ENCODE measurements at regions of chr20 and their contacts with region 1.

Region 1: DNA sequence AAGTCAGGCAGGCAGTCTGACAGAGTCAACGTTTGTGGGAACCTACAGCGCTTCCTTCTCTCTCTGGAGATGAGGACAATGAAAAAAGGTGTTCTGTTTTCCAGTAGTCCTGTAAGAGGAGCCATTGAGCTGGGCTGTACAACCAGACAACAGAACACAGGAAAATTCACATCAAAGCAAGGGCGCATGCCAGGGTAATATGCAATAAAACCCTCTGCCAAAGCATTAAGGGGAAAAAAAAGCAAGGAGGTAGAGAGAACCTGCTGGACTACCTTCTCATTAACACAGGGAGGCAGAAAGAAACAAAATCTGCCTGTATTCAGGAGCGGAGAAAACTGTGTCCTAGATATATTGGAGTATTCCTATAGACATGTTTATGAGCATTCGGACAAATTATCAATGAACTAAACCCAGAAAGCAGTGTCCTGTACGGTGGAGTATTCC is 1.3 kb downstream of the RNF24 start:
- DNase-seq: peak; percentile 85
- ATAC-seq: peak; percentile 22
- H3K4me3 ChIP-seq: peak overlapping the region; percentile 99
- H3K27ac ChIP-seq: peak overlapping the region; percentile 61; the same call in 1 of the 2 replicates
- H3K4me1 ChIP-seq: peaks cover 13% of the 10 kb centered on the region
- H3K27me3 ChIP-seq: no peaks in the 10 kb centered on the region
- CTCF ChIP-seq: peak; percentile 79
- POLR2A ChIP-seq: 0 out of 2 replicates have a peak, but pooled peaks have one; percentile 28
- RAD21 ChIP-seq: peak; percentile 82

Region 2: GRCh38 chr20:3888622-3889488 is 125.2 kb before region 1 on chr20 and contains the start of gene PANK2:
- CTCF ChIA-PET with region 1: interaction called, 4 read pairs
- POLR2A ChIA-PET with region 1: no interaction called
- dilution Hi-C with region 1: no loop called
- in situ Hi-C with region 1: no loop called
- intact Hi-C with region 1: loop called (anchors 2 kb)
- DNase-seq: peak; percentile 98
- ATAC-seq: peak; percentile 94
- H3K4me3 ChIP-seq: peak within 1 kb of the TSS; percentile 76
- H3K27ac ChIP-seq: peak within 1 kb of the TSS; percentile 97
- H3K4me1 ChIP-seq: peaks cover 11% of the 10 kb centered on the region
- H3K27me3 ChIP-seq: no peaks in the 10 kb centered on the region
- CTCF ChIP-seq: peak; percentile 66
- POLR2A ChIP-seq: peak; percentile 93
- RAD21 ChIP-seq: peak; percentile 67
- total RNA-seq, gene PANK2: 28.1 and 47.8 TPM in 2 replicates

Region 3: GRCh38 chr20:3932681-3933080 is 81.4 kb before region 1 on chr20:
- CTCF ChIA-PET with region 1: no interaction called
- POLR2A ChIA-PET with region 1: no interaction called
- dilution Hi-C with region 1: no loop called
- in situ Hi-C with region 1: no loop called
- intact Hi-C with region 1: loop called (anchors 5 kb)
- DNase-seq: peak; percentile 29
- ATAC-seq: no peak
- H3K4me3 ChIP-seq: no peak overlapping the region
- H3K27ac ChIP-seq: peak overlapping the region; percentile 11; the same call in 1 of the 2 replicates
- H3K4me1 ChIP-seq: peaks cover 19% of the 10 kb centered on the region
- H3K27me3 ChIP-seq: no peaks in the 10 kb centered on the region
- CTCF ChIP-seq: no peak
- POLR2A ChIP-seq: no peak
- RAD21 ChIP-seq: no peak

Region 4: DNA sequence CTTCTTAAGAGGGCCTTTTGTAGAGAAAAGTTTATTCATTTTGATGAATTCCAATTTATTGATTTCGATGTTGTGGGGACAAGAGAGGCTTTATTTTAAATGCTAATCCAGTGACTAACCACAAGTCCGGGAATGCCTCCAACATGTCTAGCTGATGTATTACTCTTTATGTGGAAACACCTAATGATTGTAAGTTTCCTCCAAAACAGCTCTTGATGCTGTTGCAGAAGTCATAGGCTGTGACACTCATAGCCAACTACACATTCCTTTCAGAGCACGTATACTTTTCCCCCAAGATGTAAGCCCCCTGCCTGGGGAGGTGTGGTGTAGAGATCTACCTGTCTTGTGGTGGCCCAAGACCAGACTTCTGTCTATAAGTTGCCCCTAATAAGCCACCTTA is 62.6 kb after region 1 on chr20:
- CTCF ChIA-PET with region 1: interaction called, 7 read pairs
- POLR2A ChIA-PET with region 1: no interaction called
- dilution Hi-C with region 1: no loop called
- in situ Hi-C with region 1: no loop called
- intact Hi-C with region 1: loop called (anchors 1 kb)
- DNase-seq: peak; percentile 95
- ATAC-seq: peak; percentile 60
- H3K4me3 ChIP-seq: no peak overlapping the region
- H3K27ac ChIP-seq: peak overlapping the region; percentile 19; the same call in 1 of the 2 replicates
- H3K4me1 ChIP-seq: peaks cover 6% of the 10 kb centered on the region
- H3K27me3 ChIP-seq: no peaks in the 10 kb centered on the region
- CTCF ChIP-seq: no peak
- POLR2A ChIP-seq: no peak
- RAD21 ChIP-seq: no peak

Region 5: GRCh38 chr20:4082406-4083097 is 68.5 kb after region 1 on chr20:
- CTCF ChIA-PET with region 1: interaction called, 3 read pairs
- POLR2A ChIA-PET with region 1: no interaction called
- dilution Hi-C with region 1: no loop called
- in situ Hi-C with region 1: no loop called
- intact Hi-C with region 1: loop called (anchors 1 kb)
- DNase-seq: peak; percentile 82
- ATAC-seq: peak; percentile 40
- H3K4me3 ChIP-seq: peak overlapping the region; percentile 12; the same call in 1 of the 2 replicates
- H3K27ac ChIP-seq: peak overlapping the region; percentile 97
- H3K4me1 ChIP-seq: peaks cover 22% of the 10 kb centered on the region
- H3K27me3 ChIP-seq: no peaks in the 10 kb centered on the region
- CTCF ChIP-seq: no peak
- POLR2A ChIP-seq: no peak
- RAD21 ChIP-seq: no peak

Region 6: GRCh38 chr20:4135385-4136077 is 121.5 kb after region 1 on chr20:
- CTCF ChIA-PET with region 1: no interaction called
- POLR2A ChIA-PET with region 1: no interaction called
- dilution Hi-C with region 1: no loop called
- in situ Hi-C with region 1: no loop called
- intact Hi-C with region 1: no loop called
- DNase-seq: peak; percentile 99
- ATAC-seq: peak; percentile 97
- H3K4me3 ChIP-seq: no peak overlapping the region
- H3K27ac ChIP-seq: peak overlapping the region; percentile 78
- H3K4me1 ChIP-seq: peaks cover 25% of the 10 kb centered on the region
- H3K27me3 ChIP-seq: no peaks in the 10 kb centered on the region
- CTCF ChIP-seq: no peak
- POLR2A ChIP-seq: no peak
- RAD21 ChIP-seq: no peak